CD4-positive, alpha-beta T cell (primary cell): ENCODE measurements at regions of chr2 and their contacts with region 1.

Region 1: DNA sequence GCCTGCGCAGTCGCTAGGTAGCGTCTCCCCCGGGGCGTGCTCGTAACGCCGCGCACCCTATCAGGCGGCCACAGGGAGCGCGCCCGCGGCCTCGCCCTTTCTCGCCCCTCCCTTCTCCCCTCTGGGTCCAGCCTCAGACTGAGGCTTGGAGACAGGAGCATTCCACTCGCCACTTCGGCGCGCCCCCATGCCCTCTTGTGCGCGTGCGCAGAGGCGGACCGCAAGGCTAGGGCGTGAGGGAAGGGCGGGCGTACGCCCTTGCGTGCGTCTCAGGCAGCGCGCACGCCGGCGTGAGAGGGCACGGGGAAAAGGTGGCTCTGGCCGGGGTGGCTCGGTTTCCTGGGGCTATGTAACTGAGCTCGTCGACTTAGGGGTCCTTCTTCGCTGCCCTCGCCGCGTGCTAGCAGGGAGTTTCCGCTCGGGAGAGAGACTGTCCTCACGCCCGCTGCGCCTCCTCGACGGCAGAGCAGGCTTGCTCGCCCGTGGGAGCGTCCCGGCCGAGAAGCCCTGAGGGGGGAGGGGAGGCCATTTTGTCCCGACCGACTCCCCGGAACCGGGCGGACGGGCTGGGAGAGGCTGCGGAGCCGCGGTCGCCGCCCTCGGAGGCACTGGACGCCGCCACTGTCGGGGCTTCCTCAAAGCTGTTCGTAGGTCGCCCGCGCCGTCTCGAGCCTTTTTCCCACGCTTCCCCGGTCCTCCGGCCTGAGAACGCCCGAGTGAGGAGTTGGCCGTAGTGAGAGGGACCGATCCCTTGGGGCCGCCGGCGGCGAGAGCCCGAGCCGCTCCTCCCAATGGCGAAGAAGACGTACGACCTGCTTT is at the start of gene RAB10:
- DNase-seq: peak; percentile 97 to 100 (median 99)
- ATAC-seq: peak; percentile 88
- H3K4me3 ChIP-seq: peak within 1 kb of the TSS; percentile 78
- H3K4me3 Mint-ChIP-seq: peak within 1 kb of the TSS; percentile 98
- H3K27ac ChIP-seq: peak within 1 kb of the TSS; percentile 91
- H3K27ac Mint-ChIP-seq: peak within 1 kb of the TSS; percentile 97
- H3K4me1 ChIP-seq: peaks cover 39% of the 10 kb centered on the region
- H3K4me1 Mint-ChIP-seq: peaks cover 43% of the 10 kb centered on the region
- H3K27me3 ChIP-seq: no peaks in the 10 kb centered on the region
- H3K27me3 Mint-ChIP-seq: no peaks in the 10 kb centered on the region
- CTCF ChIP-seq: no peak
- total RNA-seq, gene RAB10: 13.5 to 13.8 TPM

Region 2: GRCh38 chr2:24075915-24076848 is 1957.8 kb before region 1 on chr2 and contains the start of gene SF3B6:
- CTCF ChIA-PET with region 1: no interaction called
- POLR2A ChIA-PET with region 1: no interaction called
- intact Hi-C with region 1: loop called in 1 of 2 experiments (anchors 10 kb)
- DNase-seq: peak; percentile 98 to 100 (median 100)
- ATAC-seq: peak; percentile 81
- H3K4me3 ChIP-seq: peak within 1 kb of the TSS; percentile 93
- H3K4me3 Mint-ChIP-seq: peak within 1 kb of the TSS; percentile 97
- H3K27ac ChIP-seq: peak within 1 kb of the TSS; percentile 86 to 95
- H3K27ac Mint-ChIP-seq: peak within 1 kb of the TSS; percentile 98
- H3K4me1 ChIP-seq: peaks cover 27% of the 10 kb centered on the region
- H3K4me1 Mint-ChIP-seq: peaks cover 41% of the 10 kb centered on the region
- H3K27me3 ChIP-seq: no peaks in the 10 kb centered on the region
- H3K27me3 Mint-ChIP-seq: no peaks in the 10 kb centered on the region
- CTCF ChIP-seq: no peak
- total RNA-seq, gene SF3B6: 59.8 to 62.6 TPM

Region 3: DNA sequence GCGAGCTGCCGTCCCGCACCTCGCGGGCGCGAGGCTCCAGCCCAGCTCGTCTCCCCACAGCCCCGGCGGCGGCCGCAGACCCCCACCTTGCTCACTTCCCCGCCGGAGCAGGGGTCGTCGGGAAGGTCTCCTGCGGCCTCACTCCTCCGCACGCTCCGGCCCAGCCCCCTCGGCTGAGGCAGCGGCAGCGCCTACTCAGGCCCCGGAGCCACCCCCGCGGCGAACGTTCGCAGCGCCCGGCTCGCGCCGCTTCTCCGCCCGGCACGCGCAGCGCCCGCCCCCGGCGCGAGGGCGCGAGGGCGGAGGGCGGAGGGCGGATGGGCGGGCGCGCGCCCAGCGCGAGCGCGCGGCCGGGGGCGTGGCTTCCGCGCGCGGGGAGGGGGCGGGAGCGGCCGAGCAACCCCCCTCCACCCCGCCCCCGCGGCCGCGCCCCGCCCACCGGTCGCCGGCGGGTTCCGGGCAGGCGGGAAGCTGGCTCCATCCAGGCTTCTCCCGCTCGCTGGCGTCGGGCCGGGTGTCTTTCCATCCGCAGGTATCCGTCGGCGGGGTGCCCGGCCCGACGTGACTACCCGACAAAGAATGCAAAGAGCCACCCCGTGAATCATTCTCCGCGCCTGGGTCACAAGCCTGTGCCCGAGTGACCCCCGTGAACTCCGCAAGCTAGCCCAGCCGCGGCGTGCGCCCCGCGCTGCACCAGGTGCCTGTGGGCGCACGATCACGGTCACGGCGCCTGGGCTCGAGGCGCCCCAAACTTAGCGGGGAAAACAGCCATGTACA is 360.5 kb before region 1 on chr2 and contains the start of gene DTNB:
- CTCF ChIA-PET with region 1: no interaction called
- POLR2A ChIA-PET with region 1: interaction called, 4 read pairs
- intact Hi-C with region 1: loop called in 1 of 2 experiments (anchors 5 kb)
- DNase-seq: peak; percentile 58 to 92 (median 76)
- ATAC-seq: peak; percentile 75
- H3K4me3 ChIP-seq: peak within 1 kb of the TSS; percentile 84
- H3K4me3 Mint-ChIP-seq: peak within 1 kb of the TSS; percentile 91
- H3K27ac ChIP-seq: peak within 1 kb of the TSS; percentile 43 to 66
- H3K27ac Mint-ChIP-seq: peak within 1 kb of the TSS; percentile 85
- H3K4me1 ChIP-seq: peaks cover 23% of the 10 kb centered on the region
- H3K4me1 Mint-ChIP-seq: peaks cover 35% of the 10 kb centered on the region
- H3K27me3 ChIP-seq: peaks cover 0 to 2% of the 10 kb centered on the region in 2 experiments
- H3K27me3 Mint-ChIP-seq: no peaks in the 10 kb centered on the region
- CTCF ChIP-seq: no peak
- total RNA-seq, gene DTNB: 30.1 to 33.6 TPM

Region 4: GRCh38 chr2:25833566-25833965 is 200.5 kb before region 1 on chr2:
- CTCF ChIA-PET with region 1: no interaction called
- POLR2A ChIA-PET with region 1: no interaction called
- intact Hi-C with region 1: no loop called
- DNase-seq: no peak
- ATAC-seq: no peak
- H3K4me3 ChIP-seq: no peak overlapping the region
- H3K4me3 Mint-ChIP-seq: no peak overlapping the region
- H3K27ac ChIP-seq: no peak overlapping the region
- H3K27ac Mint-ChIP-seq: no peak overlapping the region
- H3K4me1 ChIP-seq: peaks cover 6% of the 10 kb centered on the region
- H3K4me1 Mint-ChIP-seq: peaks cover 50% of the 10 kb centered on the region
- H3K27me3 ChIP-seq: no peaks in the 10 kb centered on the region
- H3K27me3 Mint-ChIP-seq: no peaks in the 10 kb centered on the region
- CTCF ChIP-seq: no peak

Region 5: DNA sequence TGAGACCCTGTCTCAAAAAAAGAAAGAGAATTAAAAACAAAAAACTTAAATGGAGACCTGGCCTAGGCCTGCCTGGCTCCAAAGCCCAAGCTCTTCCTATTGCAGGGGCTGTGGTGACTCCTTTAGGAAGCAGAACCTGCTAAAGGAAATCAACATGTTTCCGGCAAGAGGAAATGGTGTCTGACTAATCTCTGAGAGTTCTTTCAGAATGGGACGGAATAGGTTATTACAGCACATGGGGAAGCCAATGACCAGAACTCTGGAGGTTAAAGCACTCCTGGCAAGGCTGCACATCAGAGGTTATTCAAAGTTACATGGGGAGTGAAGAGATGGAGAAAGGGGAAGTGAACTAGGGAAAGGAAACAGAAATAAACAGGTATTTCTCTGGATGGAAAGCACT is 73.1 kb before region 1 on chr2:
- CTCF ChIA-PET with region 1: no interaction called
- POLR2A ChIA-PET with region 1: no interaction called
- intact Hi-C with region 1: no loop called
- DNase-seq: peak in 3 of 14 experiments; percentile 15 to 45 (median 45)
- ATAC-seq: no peak
- H3K4me3 ChIP-seq: no peak overlapping the region
- H3K4me3 Mint-ChIP-seq: no peak overlapping the region
- H3K27ac ChIP-seq: no peak overlapping the region
- H3K27ac Mint-ChIP-seq: no peak overlapping the region
- H3K4me1 ChIP-seq: peaks cover 8% of the 10 kb centered on the region
- H3K4me1 Mint-ChIP-seq: peaks cover 9% of the 10 kb centered on the region
- H3K27me3 ChIP-seq: no peaks in the 10 kb centered on the region
- H3K27me3 Mint-ChIP-seq: no peaks in the 10 kb centered on the region
- CTCF ChIP-seq: no peak

Region 6: GRCh38 chr2:25991965-25992364 is 42.1 kb before region 1 on chr2:
- CTCF ChIA-PET with region 1: interaction called, 16 read pairs
- POLR2A ChIA-PET with region 1: interaction called, 7 read pairs
- intact Hi-C with region 1: loop called in 1 of 2 experiments (anchors 5 kb)
- DNase-seq: no peak
- ATAC-seq: peak; percentile 13
- H3K4me3 ChIP-seq: no peak overlapping the region
- H3K4me3 Mint-ChIP-seq: no peak overlapping the region
- H3K27ac ChIP-seq: no peak overlapping the region
- H3K27ac Mint-ChIP-seq: peak overlapping the region; percentile 1
- H3K4me1 ChIP-seq: peaks cover 9% of the 10 kb centered on the region
- H3K4me1 Mint-ChIP-seq: peaks cover 8% of the 10 kb centered on the region
- H3K27me3 ChIP-seq: no peaks in the 10 kb centered on the region
- H3K27me3 Mint-ChIP-seq: no peaks in the 10 kb centered on the region
- CTCF ChIP-seq: no peak

Region 7: GRCh38 chr2:26184555-26185303 is 150.7 kb after region 1 on chr2:
- CTCF ChIA-PET with region 1: interaction called, 4 read pairs
- POLR2A ChIA-PET with region 1: interaction called, 23 read pairs
- intact Hi-C with region 1: loop called in 1 of 2 experiments (anchors 5 kb)
- DNase-seq: peak; percentile 81 to 96 (median 86)
- ATAC-seq: peak; percentile 99
- H3K4me3 ChIP-seq: peak overlapping the region; percentile 60
- H3K4me3 Mint-ChIP-seq: peak overlapping the region; percentile 89
- H3K27ac ChIP-seq: peak overlapping the region in 1 of 2 donors; percentile 24
- H3K27ac Mint-ChIP-seq: peak overlapping the region; percentile 71
- H3K4me1 ChIP-seq: peaks cover 26% of the 10 kb centered on the region
- H3K4me1 Mint-ChIP-seq: peaks cover 21% of the 10 kb centered on the region
- H3K27me3 ChIP-seq: peaks cover 0 to 4% of the 10 kb centered on the region in 2 experiments
- H3K27me3 Mint-ChIP-seq: peaks cover 13% of the 10 kb centered on the region
- CTCF ChIP-seq: peak; percentile 59

Region 8: GRCh38 chr2:26345545-26346453 is 311.8 kb after region 1 on chr2 and contains the start of gene SELENOI:
- CTCF ChIA-PET with region 1: no interaction called
- POLR2A ChIA-PET with region 1: interaction called, 9 read pairs
- intact Hi-C with region 1: loop called (anchors 5 kb)
- DNase-seq: peak; percentile 98 to 100 (median 99)
- ATAC-seq: peak; percentile 93
- H3K4me3 ChIP-seq: peak within 1 kb of the TSS; percentile 96
- H3K4me3 Mint-ChIP-seq: peak within 1 kb of the TSS; percentile 97
- H3K27ac ChIP-seq: peak within 1 kb of the TSS; percentile 92 to 96
- H3K27ac Mint-ChIP-seq: peak within 1 kb of the TSS; percentile 97
- H3K4me1 ChIP-seq: peaks cover 20% of the 10 kb centered on the region
- H3K4me1 Mint-ChIP-seq: peaks cover 43% of the 10 kb centered on the region
- H3K27me3 ChIP-seq: no peaks in the 10 kb centered on the region
- H3K27me3 Mint-ChIP-seq: no peaks in the 10 kb centered on the region
- CTCF ChIP-seq: no peak
- total RNA-seq, gene SELENOI: 27.7 to 31.5 TPM

Region 9: DNA sequence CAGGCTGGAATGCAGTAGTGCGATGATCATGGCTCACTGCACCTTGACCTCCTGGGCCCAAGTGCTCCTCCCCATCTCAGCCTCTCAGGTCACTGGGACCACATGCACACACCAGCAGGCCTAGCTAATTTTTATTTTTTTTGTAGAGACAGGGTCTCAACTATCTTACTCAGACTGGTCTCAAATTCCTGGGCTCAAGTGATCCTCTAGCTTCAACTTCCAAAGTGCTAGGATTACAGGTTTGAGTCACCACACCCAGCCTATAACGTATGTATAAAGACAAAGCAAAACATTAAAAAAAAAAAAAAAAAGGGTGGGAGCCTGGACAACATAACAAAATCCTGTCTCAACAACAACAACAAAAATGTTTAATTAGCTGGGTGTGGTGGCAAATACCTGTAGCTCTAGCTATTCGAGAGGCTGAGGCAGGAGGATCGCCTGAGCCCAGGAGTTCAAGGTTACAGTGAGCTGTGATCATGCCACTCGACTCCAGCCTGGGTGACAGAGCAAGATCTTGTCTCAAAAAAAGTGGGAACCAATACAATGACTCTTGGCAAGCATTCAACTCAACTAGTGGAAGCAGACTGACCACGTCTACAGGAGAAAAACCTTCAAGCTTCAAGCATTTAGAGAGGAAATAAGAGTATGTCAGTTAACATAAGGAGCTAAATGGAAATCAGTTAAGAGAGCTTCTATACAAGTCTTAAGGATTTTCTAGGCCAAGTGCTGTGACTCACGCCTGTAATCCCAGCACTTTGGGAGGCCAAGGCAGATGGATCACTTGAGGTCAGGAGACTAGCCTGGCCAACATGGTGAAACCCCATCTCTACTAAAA is 1320.0 kb after region 1 on chr2:
- CTCF ChIA-PET with region 1: no interaction called
- POLR2A ChIA-PET with region 1: no interaction called
- intact Hi-C with region 1: no loop called
- DNase-seq: no peak
- ATAC-seq: no peak
- H3K4me3 ChIP-seq: no peak overlapping the region
- H3K4me3 Mint-ChIP-seq: peak overlapping the region; percentile 71
- H3K27ac ChIP-seq: no peak overlapping the region
- H3K27ac Mint-ChIP-seq: peak overlapping the region; percentile 99
- H3K4me1 ChIP-seq: peaks cover 50% of the 10 kb centered on the region
- H3K4me1 Mint-ChIP-seq: peaks cover 70% of the 10 kb centered on the region
- H3K27me3 ChIP-seq: no peaks in the 10 kb centered on the region
- H3K27me3 Mint-ChIP-seq: no peaks in the 10 kb centered on the region
- CTCF ChIP-seq: no peak